Posterior vena cava (tissue), 2 donors: ENCODE measurements at regions of chr7 and their contacts with region 1.

Region 1: DNA sequence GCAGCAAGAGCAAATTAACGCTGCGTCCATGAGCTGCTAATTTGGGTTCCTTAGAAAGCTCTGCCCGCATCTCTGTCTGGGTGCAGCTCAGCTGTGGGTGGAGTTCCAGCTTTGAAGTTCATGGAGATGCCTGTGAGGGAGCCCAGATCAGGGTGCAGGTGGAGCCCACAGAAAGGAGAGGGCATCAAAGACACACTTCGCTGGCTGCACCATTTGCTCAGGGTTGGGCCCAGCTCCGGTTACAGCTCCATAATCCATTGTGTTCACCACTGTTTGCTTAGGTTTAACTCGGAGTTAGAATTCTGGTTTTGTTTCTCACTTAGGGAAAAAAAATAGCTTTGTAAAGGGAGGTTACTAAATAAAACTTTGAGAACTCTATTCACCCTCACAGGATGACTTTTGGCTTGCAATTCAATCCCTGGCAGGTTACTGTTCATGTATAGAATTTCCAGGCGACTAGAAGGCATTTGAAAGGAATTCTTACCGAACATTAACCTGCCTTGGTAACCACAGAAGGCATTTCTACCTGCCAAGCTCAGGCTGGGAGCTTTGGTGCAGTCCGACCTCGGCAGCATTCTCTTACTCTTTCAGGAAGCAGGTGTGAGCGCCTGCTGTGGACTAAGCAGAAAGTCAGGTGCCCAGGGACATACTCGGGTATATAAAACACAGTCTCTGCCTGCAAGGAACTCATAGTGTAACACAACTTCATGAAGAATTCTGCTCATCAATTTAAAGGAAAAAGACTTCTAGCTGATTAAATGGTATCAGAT is 179.5 kb upstream of the RNF32 start:
- DNase-seq: no peak

Region 2: DNA sequence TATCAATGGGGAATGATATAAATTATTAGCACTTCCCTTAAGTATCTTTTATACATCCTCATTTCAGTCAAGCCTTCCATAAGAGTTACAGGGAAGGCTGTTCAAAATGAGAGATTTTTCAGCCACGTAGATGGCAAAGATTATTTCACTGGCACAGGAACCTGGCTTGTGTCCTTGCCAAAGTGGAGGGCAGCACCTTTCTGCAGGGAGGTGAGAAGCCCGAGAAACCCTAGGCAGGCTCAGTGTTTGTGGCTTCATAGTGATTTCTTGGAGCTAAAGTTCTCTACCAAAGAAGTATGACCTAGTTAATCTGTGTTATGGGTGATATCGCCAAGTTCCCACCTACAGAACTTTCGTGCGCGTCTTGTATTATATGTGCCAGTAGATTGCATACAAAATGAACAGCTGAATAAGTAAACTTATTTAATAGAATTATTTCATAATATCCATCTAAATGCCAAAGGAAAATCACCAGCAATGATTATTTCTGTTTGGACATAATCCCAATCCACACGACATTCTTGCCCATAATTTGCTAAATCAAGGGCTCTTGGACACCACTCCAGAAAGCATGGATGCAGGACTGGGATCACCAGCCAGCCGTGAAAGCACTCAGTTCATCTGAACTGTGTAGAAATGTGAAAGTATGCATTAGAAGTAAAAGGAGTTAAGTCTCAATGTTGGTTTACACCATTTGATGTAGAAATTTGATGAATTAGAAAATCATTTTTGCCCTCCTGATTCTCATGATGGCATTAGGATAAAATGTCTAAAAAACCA is 29.2 kb after region 1 on chr7:
- intact Hi-C with region 1: loop called in 1 of 2 experiments (anchors 1 kb)
- DNase-seq: no peak

Region 3: DNA sequence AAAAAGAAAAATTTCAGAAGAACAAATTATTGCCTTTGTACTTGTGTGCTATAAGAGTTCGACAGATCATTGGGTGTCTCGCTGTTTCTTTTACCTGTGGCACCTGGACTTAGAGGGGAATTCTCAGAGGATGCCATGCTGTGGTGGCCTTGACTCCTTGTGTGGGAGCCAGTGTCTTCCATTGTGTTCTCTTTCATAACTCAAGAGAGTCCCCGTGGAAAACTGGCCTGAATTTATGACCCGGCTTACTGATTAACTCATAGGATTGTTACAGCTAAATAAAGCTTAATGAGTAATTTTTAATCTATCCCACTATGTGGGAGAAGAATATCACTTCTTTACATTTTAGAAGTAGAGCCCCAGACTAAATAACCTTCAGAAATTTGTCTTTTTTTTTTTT is 732.2 kb after region 1 on chr7:
- intact Hi-C with region 1: no loop called
- DNase-seq: no peak